GM10248 (cell line): ENCODE measurements at regions of chr14 and their contacts with region 1.

Region 1: DNA sequence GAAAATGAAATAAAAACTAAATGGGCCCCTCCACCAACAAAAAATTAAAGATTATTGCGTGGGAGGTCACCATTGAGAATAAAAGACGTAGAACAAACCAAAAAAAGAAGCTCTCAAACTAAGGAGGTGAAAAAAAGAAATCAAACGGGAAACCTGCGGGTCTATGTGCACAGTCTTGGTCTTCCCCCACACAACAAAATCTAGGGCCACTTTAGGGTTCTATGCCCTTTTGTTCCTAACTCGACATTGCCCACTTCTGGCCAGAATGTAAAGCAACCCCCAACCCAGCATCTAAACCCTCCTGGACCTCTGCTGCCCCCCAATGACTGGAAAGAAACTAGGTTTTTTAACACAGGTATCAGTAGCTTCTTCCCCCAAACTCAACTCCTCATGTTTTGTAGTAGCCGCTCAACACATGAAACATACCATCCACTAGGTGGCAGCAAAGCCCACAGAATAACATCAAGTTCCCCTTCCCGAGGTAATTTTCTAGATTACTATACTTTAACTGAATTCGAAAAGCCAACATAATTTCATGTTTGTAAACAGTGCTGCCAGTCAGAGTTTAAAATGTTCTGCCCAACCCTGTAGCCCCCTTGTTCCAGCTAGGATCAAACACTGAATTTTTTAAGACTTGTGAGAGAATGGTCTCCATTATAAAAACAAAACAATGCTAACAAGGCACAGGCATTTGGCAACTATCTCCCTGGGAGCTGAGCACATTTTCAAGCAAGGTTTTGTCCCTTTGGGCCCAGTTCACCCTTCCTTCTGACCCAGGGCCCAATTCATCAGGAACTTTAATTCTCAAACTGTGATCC is 18.7 kb downstream of the DAD1 start:
- DNase-seq: peak; percentile 81
- CTCF ChIP-seq: peak; percentile 93

Region 2: GRCh38 chr14:21771690-21772089 is 798.7 kb before region 1 on chr14:
- CTCF ChIA-PET with region 1: no interaction called
- POLR2A ChIA-PET with region 1: no interaction called
- DNase-seq: no peak
- CTCF ChIP-seq: no peak

Region 3: GRCh38 chr14:22407033-22407432 is 163.3 kb before region 1 on chr14:
- CTCF ChIA-PET with region 1: interaction called, 11 read pairs
- POLR2A ChIA-PET with region 1: no interaction called
- DNase-seq: no peak
- CTCF ChIP-seq: no peak

Region 4: DNA sequence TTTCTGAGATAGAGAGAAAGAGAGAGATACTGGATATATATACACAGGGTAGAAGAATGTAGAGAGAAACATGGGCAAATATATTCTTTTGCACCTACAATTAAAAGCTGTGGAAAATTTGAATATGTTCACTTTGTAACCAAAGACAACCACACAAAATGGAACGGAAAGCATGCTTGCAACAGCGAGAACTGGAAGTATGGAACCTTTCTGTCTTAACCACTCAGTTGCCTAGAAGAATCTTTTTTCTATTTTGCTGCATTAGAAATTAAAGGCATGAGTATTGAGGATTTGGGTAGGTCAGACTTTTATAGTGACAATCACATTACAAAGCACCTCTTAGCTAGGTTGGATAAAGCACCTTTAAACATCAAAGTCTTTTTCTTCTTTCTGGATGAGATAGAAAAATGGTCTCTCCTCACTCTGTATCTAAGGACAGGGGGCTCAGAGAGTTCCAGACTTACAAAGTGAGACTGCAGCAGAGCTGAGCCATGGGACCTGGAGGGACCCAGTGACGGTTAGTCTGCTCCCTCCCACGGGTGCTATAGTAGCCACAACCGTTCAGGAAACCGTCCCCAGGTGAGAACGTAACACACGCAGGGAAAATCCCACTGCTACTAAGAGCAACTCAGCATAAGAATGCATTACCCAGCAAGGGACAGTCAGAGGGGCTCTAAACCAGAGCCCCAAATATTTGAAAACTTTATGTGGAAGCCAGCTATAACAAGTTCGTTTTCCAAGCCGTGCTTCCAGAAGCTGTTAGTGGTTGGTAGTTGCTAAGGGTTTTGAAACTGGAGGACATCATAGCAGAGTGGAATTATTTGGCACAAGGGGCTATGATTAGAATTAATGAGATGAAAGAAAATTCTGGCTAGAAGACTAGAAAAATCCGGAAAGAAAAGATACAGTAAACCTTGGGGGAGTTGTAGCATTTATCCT is 78.4 kb before region 1 on chr14:
- CTCF ChIA-PET with region 1: interaction called, 22 read pairs
- POLR2A ChIA-PET with region 1: no interaction called
- DNase-seq: peak; percentile 39
- CTCF ChIP-seq: no peak

Region 5: GRCh38 chr14:22549981-22550673 is 20.2 kb before region 1 on chr14:
- CTCF ChIA-PET with region 1: interaction called, 210 read pairs
- POLR2A ChIA-PET with region 1: interaction called, 5 read pairs
- DNase-seq: peak; percentile 53
- CTCF ChIP-seq: no peak

Region 6: GRCh38 chr14:22766456-22767322 is 196.3 kb after region 1 on chr14 and contains the start of gene OXA1L:
- CTCF ChIA-PET with region 1: interaction called, 24 read pairs
- POLR2A ChIA-PET with region 1: interaction called, 3 read pairs
- DNase-seq: peak; percentile 91
- CTCF ChIP-seq: no peak

Region 7: DNA sequence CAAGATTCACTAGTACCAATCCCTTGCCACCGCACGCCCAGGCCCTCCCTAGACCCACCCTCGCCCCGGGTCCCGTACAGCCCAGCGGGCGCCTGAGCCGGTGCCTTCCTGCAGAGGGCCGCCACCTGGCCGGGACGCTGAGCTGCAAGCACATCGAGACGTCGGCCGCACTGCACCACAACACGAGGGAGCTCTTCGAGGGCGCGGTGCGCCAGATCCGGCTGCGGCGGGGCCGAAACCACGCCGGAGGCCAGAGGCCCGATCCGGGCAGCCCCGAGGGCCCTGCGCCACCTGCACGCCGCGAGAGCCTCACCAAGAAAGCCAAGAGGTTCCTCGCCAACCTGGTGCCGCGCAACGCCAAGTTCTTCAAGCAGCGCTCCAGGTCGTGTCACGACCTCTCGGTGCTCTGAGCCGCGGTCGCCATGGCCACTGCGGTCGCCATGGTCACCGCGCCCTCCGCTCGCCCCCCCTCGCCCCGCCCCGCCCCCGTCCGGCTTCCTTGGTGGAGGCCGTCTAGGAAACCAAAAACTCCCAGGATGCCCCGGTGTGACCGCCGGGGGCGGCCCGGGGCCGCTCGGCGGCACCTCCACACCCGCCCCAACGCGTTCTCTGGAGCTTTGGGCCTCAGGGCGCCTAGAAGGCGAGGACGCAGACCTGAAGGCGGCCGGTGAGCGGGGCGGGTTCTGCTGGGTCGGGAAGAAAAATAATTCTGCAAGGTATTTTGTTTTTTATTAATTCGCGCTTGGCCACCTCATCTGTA is 316.3 kb after region 1 on chr14:
- CTCF ChIA-PET with region 1: interaction called, 50 read pairs
- POLR2A ChIA-PET with region 1: no interaction called
- DNase-seq: peak; percentile 89
- CTCF ChIP-seq: peak; percentile 40